ENCODE measurements at regions of chr1 and their contacts with region 1.

Region 1: GRCh38 chr1:158107916-158108315 is 72.8 kb upstream of the CD1D start:
- DNase-seq: no peak
- ATAC-seq: no peak
- H3K4me3 ChIP-seq: no peak overlapping the region
- H3K27ac ChIP-seq: no peak overlapping the region
- H3K4me1 ChIP-seq: no peaks in the 10 kb centered on the region
- CTCF ChIP-seq: no peak
- EP300 ChIP-seq: no peak
- POLR2A ChIP-seq: no peak
- RAD21 ChIP-seq: no peak

Region 2: GRCh38 chr1:158095737-158096335 is 12.1 kb before region 1 on chr1:
- CTCF ChIA-PET with region 1: interaction called, 35 read pairs
- POLR2A ChIA-PET with region 1: interaction called, 4 read pairs
- DNase-seq: peak; percentile 38 to 60
- ATAC-seq: peak; percentile 72 to 90
- H3K4me3 ChIP-seq: no peak overlapping the region
- H3K27ac ChIP-seq: no peak overlapping the region
- H3K4me1 ChIP-seq: no peaks in the 10 kb centered on the region
- CTCF ChIP-seq: peak; percentile 52
- EP300 ChIP-seq: no peak
- POLR2A ChIP-seq: no peak
- RAD21 ChIP-seq: peak in 1 of 2 experiments; percentile 16; a peak in 2 of 5 replicates

Region 3: GRCh38 chr1:158203693-158204457 is 96.0 kb after region 1 on chr1:
- CTCF ChIA-PET with region 1: no interaction called
- POLR2A ChIA-PET with region 1: no interaction called
- DNase-seq: peak; percentile 41 to 68
- ATAC-seq: peak; percentile 97 to 99
- H3K4me3 ChIP-seq: no peak overlapping the region
- H3K27ac ChIP-seq: no peak overlapping the region
- H3K4me1 ChIP-seq: no peaks in the 10 kb centered on the region
- CTCF ChIP-seq: peak; percentile 78
- EP300 ChIP-seq: no peak
- POLR2A ChIP-seq: no peak
- RAD21 ChIP-seq: peak; percentile 70 to 75